ENCODE measurements at regions of chr11 and their contacts with region 1.

Region 1: GRCh38 chr11:110199184-110199941 is 97.1 kb downstream of the RDX start:
- DNase-seq: no peak
- H3K4me3 ChIP-seq: no peak overlapping the region
- H3K27me3 ChIP-seq: 0 out of 2 replicates have a peak, but pooled peaks cover 1% of the 10 kb centered on the region
- CTCF ChIP-seq: no peak

Region 2: GRCh38 chr11:110217223-110217877 is 18.0 kb after region 1 on chr11:
- CTCF ChIA-PET with region 1: no interaction called
- POLR2A ChIA-PET with region 1: no interaction called
- DNase-seq: no peak
- H3K4me3 ChIP-seq: no peak overlapping the region
- H3K27me3 ChIP-seq: no peaks in the 10 kb centered on the region
- CTCF ChIP-seq: no peak

Region 3: DNA sequence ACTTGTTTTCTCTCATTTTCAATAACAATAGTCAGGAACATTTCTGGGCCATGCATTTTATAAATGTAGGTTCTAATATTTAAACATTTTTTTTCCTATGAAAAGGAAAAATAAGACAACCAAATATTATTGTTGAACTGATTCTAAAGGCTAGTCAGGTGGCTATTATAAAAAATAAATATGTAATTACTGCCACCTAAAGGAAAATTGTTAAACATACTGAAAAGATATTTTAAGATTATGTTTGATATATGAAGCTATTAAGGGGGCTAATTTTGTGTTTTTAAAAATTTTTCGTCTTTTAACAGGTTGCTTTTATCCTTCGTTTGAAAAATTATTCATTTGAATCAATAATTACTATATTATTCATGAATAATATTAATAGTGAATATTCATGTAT is 168.2 kb after region 1 on chr11:
- CTCF ChIA-PET with region 1: interaction called, 15 read pairs
- POLR2A ChIA-PET with region 1: no interaction called
- DNase-seq: no peak
- H3K4me3 ChIP-seq: no peak overlapping the region
- H3K27me3 ChIP-seq: no peaks in the 10 kb centered on the region
- CTCF ChIP-seq: no peak

Region 4: DNA sequence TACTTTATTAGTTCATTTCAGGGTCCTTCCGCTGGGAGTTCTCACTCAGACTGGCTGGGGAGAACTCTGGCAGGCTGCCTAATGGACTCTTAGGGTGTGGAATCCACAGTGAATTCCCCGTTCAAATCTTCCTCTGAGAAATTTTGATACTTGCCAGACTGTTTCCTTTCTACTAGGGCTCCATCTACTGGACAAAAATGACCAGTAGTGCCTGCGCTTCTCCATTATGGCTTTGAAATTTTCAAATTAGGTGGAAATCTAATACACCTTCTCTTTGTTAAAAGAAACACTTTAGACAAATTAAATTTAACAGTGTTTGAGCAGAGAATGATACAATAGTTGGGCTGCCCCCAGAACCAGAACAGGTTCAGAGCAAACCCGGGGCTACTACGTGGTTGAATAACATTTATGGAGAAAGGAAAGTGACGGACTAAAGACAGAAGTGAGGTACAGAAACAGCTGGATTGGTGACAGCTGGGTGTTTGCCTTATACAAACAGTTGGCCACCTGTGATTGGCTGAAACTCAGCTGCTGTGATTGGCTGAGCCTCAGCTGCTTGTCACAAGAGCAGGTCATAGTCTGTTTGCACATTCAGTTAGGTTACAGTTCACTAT is 177.5 kb after region 1 on chr11:
- CTCF ChIA-PET with region 1: interaction called, 28 read pairs
- POLR2A ChIA-PET with region 1: interaction called, 3 read pairs
- DNase-seq: peak; percentile 15
- H3K4me3 ChIP-seq: no peak overlapping the region
- H3K27me3 ChIP-seq: no peaks in the 10 kb centered on the region
- CTCF ChIP-seq: peak; percentile 79

Region 5: DNA sequence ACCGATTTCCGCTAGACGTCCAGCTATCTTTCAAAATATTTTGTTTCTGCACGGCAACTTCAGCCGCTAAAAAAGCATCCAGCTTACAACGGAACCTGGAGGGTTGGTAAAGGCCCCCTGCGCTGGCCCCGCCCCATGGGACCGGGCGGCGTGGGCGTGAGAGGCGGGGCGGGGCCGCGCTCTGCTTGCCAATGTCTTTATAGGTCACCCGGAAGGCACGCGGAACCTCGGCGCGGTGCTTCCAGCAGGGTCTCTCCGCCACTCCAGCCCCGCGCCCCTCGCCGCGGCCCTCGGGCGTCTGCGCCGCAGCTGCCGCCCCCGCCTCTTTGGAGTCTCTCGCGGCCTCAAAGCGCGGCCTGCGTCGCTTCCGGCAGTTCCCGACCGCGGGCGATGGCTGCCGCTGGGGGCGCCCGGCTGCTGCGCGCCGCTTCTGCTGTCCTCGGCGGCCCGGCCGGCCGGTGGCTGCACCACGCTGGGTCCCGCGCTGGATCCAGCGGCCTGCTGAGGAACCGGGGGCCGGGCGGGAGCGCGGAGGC is 230.4 kb after region 1 on chr11 and contains the start of gene FDX1:
- CTCF ChIA-PET with region 1: interaction called, 88 read pairs
- POLR2A ChIA-PET with region 1: no interaction called
- DNase-seq: no peak
- H3K4me3 ChIP-seq: peak within 1 kb of the TSS; percentile 78
- H3K27me3 ChIP-seq: no peaks in the 10 kb centered on the region
- CTCF ChIP-seq: no peak
- polyA plus RNA-seq, gene FDX1: 2.0 and 4.0 TPM in 2 replicates

Region 6: GRCh38 chr11:110438017-110438416 is 238.7 kb after region 1 on chr11:
- CTCF ChIA-PET with region 1: interaction called, 88 read pairs
- POLR2A ChIA-PET with region 1: no interaction called
- DNase-seq: no peak
- H3K4me3 ChIP-seq: no peak overlapping the region
- H3K27me3 ChIP-seq: no peaks in the 10 kb centered on the region
- CTCF ChIP-seq: no peak